Caco-2 (cell line): ENCODE measurements at regions of chr9 and their contacts with region 1.

Region 1: DNA sequence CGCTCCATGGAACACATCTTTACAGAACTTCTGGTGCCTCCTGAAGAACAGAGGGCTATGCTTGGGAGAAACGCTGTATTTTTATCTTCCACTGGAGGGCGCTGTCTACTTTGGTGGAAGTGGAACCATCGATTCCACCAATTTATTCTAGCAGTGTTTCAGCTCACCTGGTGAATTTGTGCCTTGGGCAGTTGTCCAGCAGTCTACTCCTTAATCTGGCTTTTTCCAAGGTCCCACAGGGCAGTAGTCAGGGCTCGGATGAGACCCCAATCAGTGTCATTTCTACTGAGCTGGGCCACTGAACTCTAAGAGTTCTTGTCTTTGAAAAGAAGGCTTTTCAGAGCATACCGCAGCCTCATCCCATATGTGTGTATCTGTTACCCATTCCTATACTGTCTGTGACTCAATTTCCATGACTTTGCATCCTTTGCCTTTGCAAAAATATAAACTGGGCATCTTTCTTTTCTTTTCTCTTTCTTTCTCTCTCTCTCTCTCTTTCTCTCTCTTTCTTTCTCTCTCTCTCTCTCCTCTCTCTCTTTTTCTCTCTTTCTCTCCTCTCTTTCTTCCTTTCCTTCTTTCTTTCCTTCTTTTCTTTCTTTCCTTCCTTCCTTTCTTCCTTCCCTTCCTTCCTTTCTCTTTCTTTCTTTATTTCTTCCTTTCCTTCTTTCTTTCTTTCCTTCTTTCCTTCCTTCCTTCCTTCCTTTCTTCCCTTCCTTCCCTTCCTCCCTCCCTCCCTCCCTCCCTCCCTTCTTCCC is 138.4 kb upstream of the ZNF618 start:
- DNase-seq: peak; percentile 45 to 67
- H3K4me3 ChIP-seq: no peak overlapping the region
- H3K4me3 Mint-ChIP-seq: no peak overlapping the region
- H3K27ac Mint-ChIP-seq: no peak overlapping the region
- H3K4me1 ChIP-seq: no peaks in the 10 kb centered on the region
- H3K4me1 Mint-ChIP-seq: no peaks in the 10 kb centered on the region
- H3K27me3 ChIP-seq: no peaks in the 10 kb centered on the region
- H3K27me3 Mint-ChIP-seq: peaks cover 4% of the 10 kb centered on the region
- CTCF ChIP-seq: peak; percentile 62

Region 2: DNA sequence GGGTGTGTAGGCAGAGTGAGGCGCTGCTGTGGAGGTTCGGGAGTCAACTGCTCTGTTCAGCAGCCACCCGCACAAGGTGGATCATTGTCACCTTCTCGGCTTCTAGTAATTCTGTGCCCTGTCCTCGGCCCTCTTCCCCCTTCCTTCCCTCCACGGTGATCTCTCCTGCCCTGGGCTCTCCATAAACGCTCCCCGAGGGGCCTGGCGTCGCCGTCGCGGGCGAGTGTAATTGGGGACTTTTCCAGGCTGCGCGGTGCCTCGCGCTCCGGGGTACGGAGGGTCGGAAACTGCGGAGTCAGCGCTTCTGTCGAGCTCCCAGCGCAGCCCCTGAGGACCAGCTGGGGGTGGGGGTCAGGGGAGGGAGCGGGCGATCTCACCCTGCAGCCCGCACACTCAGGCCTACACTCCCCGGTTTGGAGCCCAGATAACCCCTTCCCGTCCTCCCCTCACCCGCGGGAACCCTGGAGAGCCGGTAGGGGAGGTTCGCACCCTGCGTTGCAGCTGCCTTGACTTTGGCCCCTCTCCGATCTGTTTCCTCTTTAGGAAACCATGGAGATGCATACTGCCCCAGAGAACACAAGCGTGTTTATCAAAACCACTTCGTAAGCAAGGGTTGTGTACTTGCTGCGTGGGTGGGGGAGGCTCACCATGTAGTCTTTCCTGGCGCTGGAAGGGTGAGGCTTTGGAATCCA is 49.9 kb before region 1 on chr9:
- CTCF ChIA-PET with region 1: no interaction called
- POLR2A ChIA-PET with region 1: no interaction called
- intact Hi-C with region 1: no loop called
- DNase-seq: no peak
- H3K4me3 ChIP-seq: no peak overlapping the region
- H3K4me3 Mint-ChIP-seq: no peak overlapping the region
- H3K27ac Mint-ChIP-seq: no peak overlapping the region
- H3K4me1 ChIP-seq: peaks cover 6% of the 10 kb centered on the region; the same call in 1 of the 2 replicates
- H3K4me1 Mint-ChIP-seq: peaks cover 7% of the 10 kb centered on the region
- H3K27me3 ChIP-seq: no peaks in the 10 kb centered on the region; the same call in 1 of the 2 replicates
- H3K27me3 Mint-ChIP-seq: peaks cover 17% of the 10 kb centered on the region
- CTCF ChIP-seq: no peak

Region 3: GRCh38 chr9:114033397-114034103 is 295.9 kb after region 1 on chr9:
- CTCF ChIA-PET with region 1: no interaction called
- POLR2A ChIA-PET with region 1: no interaction called
- intact Hi-C with region 1: loop called (anchors 10 kb)
- DNase-seq: peak in 1 of 2 experiments; percentile 30
- H3K4me3 ChIP-seq: no peak overlapping the region
- H3K4me3 Mint-ChIP-seq: no peak overlapping the region
- H3K27ac Mint-ChIP-seq: no peak overlapping the region
- H3K4me1 ChIP-seq: no peaks in the 10 kb centered on the region
- H3K4me1 Mint-ChIP-seq: no peaks in the 10 kb centered on the region
- H3K27me3 ChIP-seq: no peaks in the 10 kb centered on the region
- H3K27me3 Mint-ChIP-seq: no peaks in the 10 kb centered on the region
- CTCF ChIP-seq: peak in 1 of 2 experiments; percentile 38

Region 4: DNA sequence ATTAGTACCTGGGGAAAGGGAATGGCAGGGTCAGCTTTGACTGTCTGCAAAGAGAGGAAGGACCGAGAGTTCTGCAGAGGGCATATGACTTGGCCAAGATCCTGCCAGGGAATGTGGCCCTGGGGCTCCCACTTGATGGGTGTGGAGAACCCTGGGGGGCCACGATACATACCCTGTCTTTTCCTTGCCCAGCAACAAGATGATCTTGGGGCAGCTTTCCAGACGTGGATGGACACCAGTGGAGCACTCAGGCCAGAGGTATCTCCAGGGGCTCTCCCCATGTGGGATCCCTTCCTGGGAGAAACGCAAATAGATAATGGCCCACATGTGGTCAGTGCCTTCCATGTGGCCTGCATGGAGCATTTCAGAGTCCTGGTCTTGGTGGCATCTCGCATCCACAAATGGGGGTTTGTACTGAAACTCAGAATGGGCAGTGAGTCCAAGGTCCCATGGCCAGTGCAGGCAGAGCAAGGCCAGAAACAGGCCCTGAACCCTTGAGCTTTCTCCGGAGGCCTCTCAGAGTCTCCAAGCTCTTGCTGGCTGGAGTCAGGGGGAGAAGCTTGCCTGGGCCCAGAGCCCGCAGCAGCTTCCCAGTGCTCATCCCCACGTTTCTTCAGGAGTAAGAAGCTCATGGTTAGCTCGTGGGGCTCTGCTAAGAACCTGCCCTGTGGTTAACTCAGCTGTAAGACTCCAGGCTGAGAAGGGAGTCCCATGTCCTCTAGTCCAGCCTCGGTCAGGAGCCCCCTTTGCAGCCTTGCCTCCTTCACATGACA is 566.9 kb after region 1 on chr9:
- CTCF ChIA-PET with region 1: no interaction called
- POLR2A ChIA-PET with region 1: no interaction called
- intact Hi-C with region 1: loop called (anchors 1 kb)
- DNase-seq: no peak
- H3K4me3 ChIP-seq: no peak overlapping the region
- H3K4me3 Mint-ChIP-seq: no peak overlapping the region
- H3K27ac Mint-ChIP-seq: no peak overlapping the region
- H3K4me1 ChIP-seq: no peaks in the 10 kb centered on the region
- H3K4me1 Mint-ChIP-seq: no peaks in the 10 kb centered on the region
- H3K27me3 ChIP-seq: no peaks in the 10 kb centered on the region
- H3K27me3 Mint-ChIP-seq: no peaks in the 10 kb centered on the region
- CTCF ChIP-seq: no peak